ENCODE measurements at regions of chr13 and their contacts with region 1.

Region 1: GRCh38 chr13:51583875-51584730 is at the start of gene WDFY2:
- DNase-seq: peak; percentile 100
- ATAC-seq: peak; percentile 80
- H3K4me3 Mint-ChIP-seq: peak within 1 kb of the TSS; percentile 94
- H3K27ac Mint-ChIP-seq: peak within 1 kb of the TSS; percentile 97
- H3K4me1 Mint-ChIP-seq: peaks cover 31% of the 10 kb centered on the region
- H3K27me3 Mint-ChIP-seq: no peaks in the 10 kb centered on the region
- CTCF ChIP-seq: no peak
- total RNA-seq, gene WDFY2: 16.8 and 20.8 TPM in 2 replicates

Region 2: GRCh38 chr13:51599444-51600176 is 15.5 kb after region 1 on chr13:
- CTCF ChIA-PET with region 1: interaction called, 4 read pairs
- POLR2A ChIA-PET with region 1: interaction called, 7 read pairs
- intact Hi-C with region 1: loop called (anchors 1 kb)
- DNase-seq: no peak
- ATAC-seq: no peak
- H3K4me3 Mint-ChIP-seq: no peak overlapping the region
- H3K27ac Mint-ChIP-seq: peak overlapping the region; percentile 68
- H3K4me1 Mint-ChIP-seq: peaks cover 74% of the 10 kb centered on the region
- H3K27me3 Mint-ChIP-seq: no peaks in the 10 kb centered on the region
- CTCF ChIP-seq: no peak

Region 3: GRCh38 chr13:51645154-51645650 is 61.1 kb after region 1 on chr13:
- CTCF ChIA-PET with region 1: no interaction called
- POLR2A ChIA-PET with region 1: interaction called, 8 read pairs
- intact Hi-C with region 1: loop called (anchors 1 kb)
- DNase-seq: no peak
- ATAC-seq: peak; percentile 78
- H3K4me3 Mint-ChIP-seq: peak overlapping the region; percentile 62
- H3K27ac Mint-ChIP-seq: peak overlapping the region; percentile 90
- H3K4me1 Mint-ChIP-seq: peaks cover 59% of the 10 kb centered on the region
- H3K27me3 Mint-ChIP-seq: no peaks in the 10 kb centered on the region
- CTCF ChIP-seq: no peak

Region 4: DNA sequence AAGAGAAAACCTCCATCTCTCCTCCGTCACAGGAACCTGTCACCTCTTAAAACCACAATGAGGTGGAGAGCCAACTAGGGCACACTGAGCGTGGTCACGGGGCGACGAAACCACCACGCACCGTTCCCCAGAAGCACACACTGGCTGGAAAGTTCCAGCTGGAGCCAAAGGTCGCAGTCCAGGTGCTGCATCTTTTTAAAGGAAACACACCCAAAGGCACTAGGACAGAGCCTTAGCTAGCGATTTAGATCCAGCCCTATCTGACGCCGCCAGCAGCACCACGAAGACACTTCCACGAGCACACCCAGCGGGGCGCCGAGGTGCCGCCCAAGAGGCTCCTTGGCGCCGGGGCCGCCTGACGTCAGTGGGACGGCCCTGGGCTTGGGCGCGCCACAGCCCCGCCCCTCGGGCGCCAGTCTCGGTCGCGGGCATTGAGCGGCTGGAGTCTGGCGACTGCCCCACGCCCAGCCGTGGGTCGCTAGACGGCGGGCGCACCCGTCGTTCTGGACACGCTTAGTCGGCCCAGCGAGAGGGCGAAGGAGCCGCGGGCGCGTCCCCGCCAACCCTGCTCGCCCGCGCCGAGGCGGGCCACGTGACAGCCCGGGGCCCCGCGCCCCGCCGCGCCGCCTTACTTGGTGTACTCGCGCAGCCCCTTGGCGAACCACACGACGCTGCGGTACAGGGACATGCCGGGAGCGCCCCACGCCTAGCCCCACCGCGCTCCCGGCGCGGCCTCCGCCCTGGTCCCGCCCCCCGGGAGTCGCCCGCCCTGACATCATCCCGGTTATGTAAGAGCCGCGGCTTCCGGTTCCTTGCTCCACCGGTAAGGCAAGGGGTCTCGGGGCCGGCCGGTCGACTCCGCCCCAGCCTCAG is 219.6 kb after region 1 on chr13 and contains the start of gene DHRS12:
- CTCF ChIA-PET with region 1: interaction called, 5 read pairs
- POLR2A ChIA-PET with region 1: interaction called, 4 read pairs
- intact Hi-C with region 1: loop called (anchors 1 kb)
- DNase-seq: peak; percentile 84
- ATAC-seq: peak; percentile 81
- H3K4me3 Mint-ChIP-seq: peak within 1 kb of the TSS; percentile 92
- H3K27ac Mint-ChIP-seq: peak within 1 kb of the TSS; percentile 99
- H3K4me1 Mint-ChIP-seq: peaks cover 47% of the 10 kb centered on the region
- H3K27me3 Mint-ChIP-seq: no peaks in the 10 kb centered on the region
- CTCF ChIP-seq: no peak
- total RNA-seq, gene DHRS12: 11.6 and 14.1 TPM in 2 replicates

Region 5: DNA sequence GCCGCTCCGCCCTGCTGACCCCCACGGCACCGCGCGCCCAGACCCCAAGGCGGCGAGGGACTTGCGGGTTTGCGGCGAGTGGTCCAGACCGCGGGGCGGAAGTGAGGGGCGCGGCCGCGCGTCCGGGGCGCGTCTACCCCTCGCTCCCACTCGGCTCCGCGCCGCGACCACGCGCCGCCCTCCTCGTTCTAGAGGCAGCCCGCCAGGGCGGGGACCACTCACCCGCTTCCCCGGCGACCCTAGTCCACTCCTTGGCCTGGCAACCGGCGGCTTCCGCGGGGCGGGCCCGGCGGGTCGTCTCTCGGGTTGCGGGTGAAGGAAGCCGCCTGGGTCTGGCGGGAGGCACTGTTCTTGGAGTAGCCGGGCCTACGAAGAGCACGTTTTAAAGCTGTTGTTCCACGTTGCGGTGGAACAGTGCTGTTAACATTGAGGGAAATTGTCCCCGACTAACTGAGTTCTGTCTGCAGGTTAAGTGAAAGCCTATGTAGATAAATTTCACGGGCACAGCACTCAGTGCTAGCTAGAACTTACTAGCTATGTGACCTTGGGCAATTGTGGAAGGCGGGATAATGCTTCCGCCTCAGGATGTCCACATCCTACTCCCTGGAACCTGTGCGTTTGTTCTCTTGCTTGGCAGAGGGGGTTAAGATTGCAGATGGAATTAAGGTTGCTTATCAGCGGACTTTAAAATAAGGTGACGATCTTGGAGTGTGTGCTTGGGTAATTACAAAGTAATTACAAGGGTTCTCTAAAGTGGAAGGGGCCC is 575.4 kb after region 1 on chr13 and contains the start of gene NEK3:
- CTCF ChIA-PET with region 1: no interaction called
- POLR2A ChIA-PET with region 1: no interaction called
- intact Hi-C with region 1: loop called (anchors 1 kb)
- DNase-seq: peak; percentile 69
- ATAC-seq: peak; percentile 81
- H3K4me3 Mint-ChIP-seq: peak within 1 kb of the TSS; percentile 90
- H3K27ac Mint-ChIP-seq: peak within 1 kb of the TSS; percentile 81
- H3K4me1 Mint-ChIP-seq: peaks cover 24% of the 10 kb centered on the region
- H3K27me3 Mint-ChIP-seq: no peaks in the 10 kb centered on the region
- CTCF ChIP-seq: no peak
- total RNA-seq, gene NEK3: 9.1 and 12.0 TPM in 2 replicates

Region 6: GRCh38 chr13:53238261-53238660 is 1654.2 kb after region 1 on chr13:
- CTCF ChIA-PET with region 1: no interaction called
- POLR2A ChIA-PET with region 1: no interaction called
- intact Hi-C with region 1: no loop called
- DNase-seq: no peak
- ATAC-seq: no peak
- H3K4me3 Mint-ChIP-seq: no peak overlapping the region
- H3K27ac Mint-ChIP-seq: no peak overlapping the region
- H3K4me1 Mint-ChIP-seq: no peaks in the 10 kb centered on the region
- H3K27me3 Mint-ChIP-seq: no peaks in the 10 kb centered on the region
- CTCF ChIP-seq: no peak